Right ventricle myocardium inferior (tissue), 1 donor: ENCODE measurements at regions of chr5 and their contacts with region 1.

Region 1: GRCh38 chr5:16013334-16014065 is 166.1 kb downstream of the MARCHF11 start:
- DNase-seq: no peak
- ATAC-seq: no peak

Region 2: GRCh38 chr5:15957124-15957523 is 56.4 kb before region 1 on chr5:
- intact Hi-C with region 1: no loop called
- DNase-seq: no peak
- ATAC-seq: peak; percentile 21

Region 3: DNA sequence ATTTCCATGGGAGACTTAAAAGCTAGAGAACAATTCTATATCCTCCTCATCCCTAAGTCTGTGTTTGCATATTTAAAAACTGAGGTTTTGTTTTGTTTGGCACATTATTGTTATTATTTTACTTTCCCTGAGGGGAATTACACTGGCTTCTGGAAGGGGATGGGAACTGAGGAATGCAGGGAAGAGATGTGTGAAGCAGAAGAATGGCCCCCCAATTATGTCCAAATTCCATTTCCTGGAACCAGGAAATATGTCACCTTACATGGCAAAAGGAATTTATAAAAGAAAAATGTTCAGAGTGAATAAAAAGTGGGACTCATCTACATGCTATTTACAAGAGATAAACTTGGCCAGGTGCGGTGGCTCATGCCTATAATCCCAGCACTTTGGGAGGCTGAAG is 36.3 kb after region 1 on chr5:
- intact Hi-C with region 1: loop called (anchors 2 kb)
- DNase-seq: no peak
- ATAC-seq: no peak